ENCODE measurements at regions of chr12 and their contacts with region 1.

Region 1: GRCh38 chr12:70719672-70720420 is 82.6 kb upstream of the PTPRB start:
- DNase-seq: peak; percentile 45
- H3K4me3 ChIP-seq: no peak overlapping the region
- H3K27ac ChIP-seq: no peak overlapping the region
- H3K4me1 ChIP-seq: no peaks in the 10 kb centered on the region
- CTCF ChIP-seq: peak; percentile 96

Region 2: DNA sequence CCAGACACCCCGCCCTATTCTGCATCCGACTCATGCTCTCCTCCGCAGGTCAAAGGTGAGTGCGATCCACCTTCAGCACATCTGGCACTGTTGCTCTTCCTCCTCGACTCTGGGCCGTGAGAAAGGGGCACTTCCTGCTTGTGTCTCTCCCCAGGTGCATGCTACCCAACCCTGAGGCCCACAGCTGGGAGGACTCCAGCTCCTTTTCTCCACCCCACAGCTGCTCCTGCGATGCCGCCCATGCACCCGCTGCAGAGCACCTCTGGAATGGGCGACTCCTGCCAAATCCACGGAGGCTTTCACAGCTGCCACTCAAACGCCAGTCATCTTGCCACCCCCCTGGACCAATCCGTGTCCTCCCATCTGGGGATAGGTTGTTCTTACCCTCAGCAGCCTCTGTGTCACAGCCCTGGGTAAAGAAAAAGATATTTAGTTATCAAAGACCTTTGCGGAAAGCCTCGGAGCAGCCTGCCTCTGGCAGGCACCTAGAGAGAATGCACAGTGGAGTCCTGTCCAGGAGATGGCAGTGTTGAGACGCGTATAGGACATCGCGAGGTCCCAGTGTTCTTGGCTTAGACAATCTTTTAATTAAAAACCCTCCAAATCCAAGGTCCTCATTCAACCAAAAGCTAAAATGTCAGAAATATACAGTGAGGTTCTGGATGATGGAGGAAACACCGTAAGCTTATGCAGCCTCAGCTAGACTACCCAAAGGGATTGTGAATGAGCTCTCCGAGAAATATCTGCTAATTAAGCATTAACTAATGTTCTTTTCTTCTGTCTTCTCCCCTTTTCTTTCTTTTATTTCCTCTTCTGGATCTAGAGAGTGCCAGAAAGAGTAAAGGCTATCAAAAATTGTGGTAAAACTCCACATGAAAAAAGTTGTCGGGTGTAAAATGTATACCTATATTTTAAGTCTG is 840.5 kb before region 1 on chr12:
- CTCF ChIA-PET with region 1: no interaction called
- POLR2A ChIA-PET with region 1: no interaction called
- intact Hi-C with region 1: loop called (anchors 2 kb)
- DNase-seq: peak; percentile 85
- H3K4me3 ChIP-seq: peak overlapping the region; percentile 21
- H3K27ac ChIP-seq: no peak overlapping the region
- H3K4me1 ChIP-seq: peaks cover 7% of the 10 kb centered on the region
- CTCF ChIP-seq: peak; percentile 98

Region 3: GRCh38 chr12:70590051-70590450 is 129.8 kb before region 1 on chr12:
- CTCF ChIA-PET with region 1: no interaction called
- POLR2A ChIA-PET with region 1: no interaction called
- intact Hi-C with region 1: loop called (anchors 1 kb)
- DNase-seq: peak; percentile 52
- H3K4me3 ChIP-seq: no peak overlapping the region
- H3K27ac ChIP-seq: no peak overlapping the region
- H3K4me1 ChIP-seq: no peaks in the 10 kb centered on the region
- CTCF ChIP-seq: peak; percentile 92

Measured in OCI-LY7 (cell line).